ENCODE measurements at regions of chr2 and their contacts with region 1.

Region 1: DNA sequence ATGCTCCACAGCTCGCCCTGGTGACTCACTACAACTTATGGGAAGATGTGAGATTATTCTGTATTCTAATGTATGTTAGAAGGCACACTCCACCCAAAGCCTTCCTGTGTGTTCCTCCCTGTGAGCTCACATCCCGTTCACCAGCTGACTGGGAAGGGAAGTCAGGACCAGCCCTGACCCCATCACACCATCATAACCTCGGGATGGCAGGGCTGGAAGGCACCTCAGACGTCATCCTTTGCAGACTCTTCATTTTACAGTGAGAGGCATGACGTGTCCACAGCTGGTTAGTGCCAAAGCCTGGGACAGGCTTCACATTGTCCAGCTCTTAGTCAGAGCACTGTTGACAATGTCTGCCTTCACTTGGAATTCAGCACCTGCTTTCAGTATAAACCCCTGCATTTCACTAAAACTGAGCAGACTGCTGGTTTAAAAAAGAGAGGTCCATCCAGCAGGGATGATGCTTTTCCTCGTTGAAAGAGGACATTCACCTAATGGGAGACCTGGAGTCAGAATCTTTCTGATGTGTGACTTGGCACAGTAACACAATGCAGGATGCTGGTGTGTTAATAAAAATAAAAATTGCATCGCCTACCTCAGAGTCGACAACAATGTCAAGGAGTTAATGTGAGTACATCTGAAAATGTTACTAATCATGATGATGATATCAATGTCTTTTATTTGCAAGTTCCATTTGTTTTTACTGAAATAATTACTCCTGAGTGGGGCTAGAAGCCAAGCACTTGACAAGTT is 418.0 kb upstream of the TNP1 start:
- DNase-seq: peak; percentile 59
- H3K4me3 Mint-ChIP-seq: no peak overlapping the region
- H3K27ac Mint-ChIP-seq: no peak overlapping the region
- H3K4me1 Mint-ChIP-seq: peaks cover 14% of the 10 kb centered on the region
- H3K27me3 Mint-ChIP-seq: no peaks in the 10 kb centered on the region
- CTCF ChIP-seq: no peak

Region 2: DNA sequence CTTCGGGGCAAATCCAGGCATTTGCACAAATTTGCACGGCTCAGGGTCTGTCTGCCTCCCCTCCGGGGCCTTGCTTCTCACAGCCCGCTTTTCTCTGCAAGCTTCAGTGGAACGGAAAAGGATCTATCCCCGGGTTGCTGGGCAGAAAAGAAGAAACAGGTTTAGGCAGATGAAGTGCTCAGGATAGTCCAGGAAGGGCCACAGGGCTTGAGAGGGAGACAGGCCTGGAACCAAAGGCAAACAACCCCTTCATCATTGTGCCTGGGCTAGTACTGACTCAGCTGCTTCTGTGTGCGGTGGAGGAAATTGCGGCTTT is 70.2 kb before region 1 on chr2:
- CTCF ChIA-PET with region 1: no interaction called
- POLR2A ChIA-PET with region 1: no interaction called
- intact Hi-C with region 1: loop called (anchors 2 kb)
- DNase-seq: no peak
- H3K4me3 Mint-ChIP-seq: no peak overlapping the region
- H3K27ac Mint-ChIP-seq: no peak overlapping the region
- H3K4me1 Mint-ChIP-seq: no peaks in the 10 kb centered on the region
- H3K27me3 Mint-ChIP-seq: no peaks in the 10 kb centered on the region
- CTCF ChIP-seq: no peak